ENCODE measurements at regions of chr2 and their contacts with region 1.

Region 1: DNA sequence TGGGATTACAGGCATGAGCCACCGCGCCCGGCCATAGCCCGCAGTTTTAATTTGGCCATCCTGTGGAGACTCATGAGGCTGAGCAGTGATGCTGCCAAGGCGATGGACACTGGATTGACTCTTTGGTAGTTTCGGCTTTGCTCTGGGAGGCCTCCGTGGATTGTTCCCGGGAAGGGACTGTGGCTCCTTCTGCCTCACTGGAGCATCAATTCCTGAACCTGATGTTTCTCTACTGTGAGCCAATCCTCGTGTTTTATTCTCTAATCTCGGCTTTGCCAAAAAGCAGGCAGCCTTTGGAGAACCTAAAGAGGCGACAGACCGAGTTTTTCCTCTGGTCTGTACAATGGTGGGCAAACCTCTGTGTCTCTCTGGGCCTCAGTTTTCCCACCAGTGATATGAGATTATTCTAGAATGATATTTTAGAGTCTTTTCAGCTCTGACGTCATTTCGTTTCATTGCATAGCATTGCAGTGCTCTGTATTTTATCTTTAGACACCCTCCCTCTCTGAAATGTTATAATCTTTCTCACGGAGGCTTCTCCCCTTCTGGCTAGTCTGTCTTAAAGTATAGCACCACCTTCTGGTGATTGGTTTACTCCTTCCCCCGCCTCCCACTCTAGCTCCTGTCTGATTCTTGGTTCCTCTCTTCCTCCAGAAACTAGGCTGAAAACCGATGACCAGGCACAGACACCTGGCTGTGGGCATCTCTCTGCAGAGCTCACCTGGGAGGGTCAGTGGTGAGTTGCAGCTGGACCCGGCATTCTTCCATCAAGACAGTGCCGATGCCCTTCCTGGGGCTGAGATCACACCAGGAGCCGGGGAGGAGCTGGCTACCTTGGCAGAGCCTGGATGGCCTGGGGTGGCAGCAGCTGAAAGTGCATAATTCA is 341.3 kb downstream of the MYCN start:
- DNase-seq: no peak
- ATAC-seq: peak; percentile 74

Region 2: DNA sequence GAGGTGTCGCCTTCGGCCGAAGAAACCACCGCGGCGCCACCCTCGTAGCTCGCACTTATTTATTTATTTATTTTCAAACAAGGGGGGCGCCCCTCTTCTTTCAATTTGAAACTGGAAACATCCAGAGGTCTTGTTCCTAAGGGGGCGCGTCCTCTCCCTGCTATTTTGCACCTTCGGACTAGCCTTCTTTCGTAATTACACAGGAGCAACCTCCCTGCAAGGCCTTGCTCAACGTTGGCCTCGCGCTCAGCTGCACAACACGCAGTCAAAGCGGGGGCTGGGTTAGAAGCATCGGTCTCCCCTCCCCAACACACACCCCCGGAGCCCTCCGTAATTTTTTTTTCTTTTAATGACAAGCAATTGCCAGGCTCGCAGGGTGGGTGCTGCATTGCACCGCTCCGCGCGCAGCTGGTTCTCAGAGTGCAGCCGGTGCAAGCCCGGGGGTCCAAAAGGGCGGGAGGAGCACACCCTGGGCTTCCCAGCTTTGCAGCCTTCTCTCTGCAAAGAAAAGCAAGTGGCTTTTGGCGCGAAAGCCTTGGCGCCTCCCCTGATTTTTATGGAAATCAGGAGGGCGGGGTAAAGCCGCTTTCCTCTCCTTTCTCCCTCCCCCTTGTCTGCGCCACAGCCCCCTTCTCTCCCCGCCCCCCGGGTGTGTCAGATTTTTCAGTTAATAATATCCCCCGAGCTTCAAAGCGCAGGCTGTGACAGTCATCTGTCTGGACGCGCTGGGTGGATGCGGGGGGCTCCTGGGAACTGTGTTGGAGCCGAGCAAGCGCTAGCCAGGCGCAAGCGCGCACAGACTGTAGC is 341.6 kb before region 1 on chr2 and contains the start of gene MYCN:
- intact Hi-C with region 1: loop called (anchors 10 kb)
- DNase-seq: peak; percentile 86
- ATAC-seq: peak; percentile 61
- total RNA-seq, gene MYCN: 7.0 TPM

Region 3: DNA sequence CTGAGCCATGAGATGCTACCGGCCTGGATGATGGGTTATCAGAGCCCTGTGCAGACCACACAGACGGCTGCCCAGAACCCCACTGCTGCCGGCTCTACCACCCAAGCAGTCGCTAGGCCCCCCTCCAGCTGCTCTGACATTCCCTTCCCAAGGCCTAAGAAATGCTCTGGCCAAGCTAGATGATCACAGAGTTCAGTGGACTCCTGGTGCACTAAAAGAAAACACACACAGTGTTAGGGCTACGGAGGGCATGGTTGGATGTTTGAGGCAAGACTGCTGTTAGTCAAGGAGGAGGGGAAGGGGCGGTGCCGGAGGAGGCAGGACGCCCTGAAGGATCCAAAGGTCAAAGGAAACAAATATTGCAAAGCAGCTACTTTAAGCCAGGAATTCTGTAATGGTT is 166.9 kb before region 1 on chr2:
- intact Hi-C with region 1: no loop called
- DNase-seq: no peak
- ATAC-seq: no peak

Measured in sciatic nerve (tissue), 2 donors.